Dorsolateral prefrontal cortex (tissue), 120 donors: ENCODE measurements at regions of chr2 and their contacts with region 1.

Region 1: DNA sequence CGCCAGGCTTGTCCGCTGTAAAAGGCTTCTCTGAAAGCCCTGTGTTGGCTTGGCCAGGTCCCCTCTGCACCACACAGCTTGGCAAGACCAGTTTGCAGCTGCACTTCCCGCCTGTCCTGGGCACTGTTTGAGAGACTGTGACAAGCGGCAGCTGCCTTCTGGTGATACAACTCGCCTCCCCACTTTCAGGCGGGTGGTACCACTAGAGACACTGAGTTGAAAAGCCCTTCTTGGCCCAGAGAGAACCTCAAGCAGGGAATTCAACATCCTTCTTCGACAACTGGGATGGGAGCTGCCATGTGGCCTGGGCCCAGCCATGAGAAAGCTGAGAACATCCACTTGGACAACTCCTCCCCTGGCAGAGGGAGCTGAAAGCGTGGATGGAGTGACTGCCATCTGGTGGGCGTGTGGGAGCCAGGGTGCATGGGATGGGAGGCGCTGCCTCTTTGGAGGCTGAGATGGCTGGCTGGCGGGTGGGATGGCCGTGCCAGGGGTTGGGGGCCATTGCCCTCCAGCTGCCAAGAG is 125.5 kb upstream of the REV1 start:
- DNase-seq: peak in 8 of 10 donors; percentile 31 to 72 (median 64)
- H3K4me3 ChIP-seq: peak overlapping the region in 1 of 59 donors; percentile 10
- H3K27ac ChIP-seq: peak overlapping the region in 29 of 59 donors; percentile 6 to 68 (median 34)
- H3K27me3 ChIP-seq: no peaks in the 10 kb centered on the region
- CTCF ChIP-seq: peak in 52 of 56 donors; percentile 16 to 73 (median 41)

Region 2: GRCh38 chr2:99648178-99648844 is 33.0 kb after region 1 on chr2:
- intact Hi-C with region 1: loop called in 1 of 2 experiments (anchors 1 kb)
- DNase-seq: peak in 4 of 10 donors; percentile 12 to 45 (median 41)
- H3K4me3 ChIP-seq: no peak overlapping the region
- H3K27ac ChIP-seq: peak overlapping the region in 14 of 59 donors; percentile 0 to 69 (median 36)
- H3K27me3 ChIP-seq: no peaks in the 10 kb centered on the region
- CTCF ChIP-seq: no peak

Region 3: GRCh38 chr2:99710721-99711120 is 95.4 kb after region 1 on chr2:
- intact Hi-C with region 1: no loop called
- DNase-seq: peak in 1 of 10 donors; percentile 88
- H3K4me3 ChIP-seq: no peak overlapping the region
- H3K27ac ChIP-seq: peak overlapping the region in 1 of 59 donors; percentile 65
- H3K27me3 ChIP-seq: no peaks in the 10 kb centered on the region
- CTCF ChIP-seq: no peak

Region 4: DNA sequence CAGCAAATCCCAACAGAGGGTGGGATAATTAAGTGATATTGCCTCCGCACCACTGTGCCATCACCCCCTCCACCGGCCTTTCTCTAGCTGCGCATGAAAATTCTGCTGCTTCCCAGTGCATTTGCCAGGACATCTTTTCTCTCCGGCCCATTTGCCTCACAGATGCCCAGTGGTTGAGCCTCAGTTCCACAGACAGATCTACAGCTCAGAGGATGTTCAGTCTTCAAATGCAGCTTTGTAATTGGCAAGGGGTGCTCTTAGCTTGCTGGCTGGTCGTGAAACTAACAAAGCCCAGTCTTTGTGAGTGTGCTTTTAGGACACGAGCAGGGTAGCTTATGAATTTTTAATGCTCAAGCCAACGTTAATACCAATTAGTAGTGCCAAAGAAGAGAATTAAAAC is 127.8 kb after region 1 on chr2:
- intact Hi-C with region 1: no loop called
- DNase-seq: no peak
- H3K4me3 ChIP-seq: no peak overlapping the region
- H3K27ac ChIP-seq: no peak overlapping the region
- H3K27me3 ChIP-seq: no peaks in the 10 kb centered on the region
- CTCF ChIP-seq: no peak